ENCODE measurements at regions of chr10 and their contacts with region 1.

Region 1: GRCh38 chr10:63157845-63158624 is 24.9 kb downstream of the NRBF2 start:
- DNase-seq: peak; percentile 74
- ATAC-seq: peak; percentile 90
- H3K4me3 ChIP-seq: no peak overlapping the region
- H3K27ac ChIP-seq: no peak overlapping the region
- H3K4me1 ChIP-seq: no peaks in the 10 kb centered on the region
- H3K27me3 ChIP-seq: no peaks in the 10 kb centered on the region
- CTCF ChIP-seq: peak; percentile 89

Region 2: DNA sequence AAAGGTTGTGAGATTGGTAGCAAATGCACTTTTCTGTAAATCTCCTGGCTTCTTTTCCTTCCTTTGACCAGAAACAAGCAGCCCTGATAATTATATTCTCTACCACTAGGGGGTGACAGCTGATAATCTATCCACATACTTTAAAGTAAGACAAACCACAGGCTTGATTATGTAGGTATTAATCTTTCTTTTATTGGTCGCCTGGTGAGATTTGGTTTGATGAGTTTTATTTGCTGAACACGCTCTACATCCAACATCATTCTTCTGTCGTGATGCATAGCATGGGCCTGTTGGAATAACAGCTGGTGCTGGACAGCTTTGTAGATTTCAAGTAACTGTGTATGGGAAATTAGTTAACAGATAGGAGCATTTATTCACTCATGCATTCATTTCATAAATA is 720.3 kb before region 1 on chr10:
- CTCF ChIA-PET with region 1: no interaction called
- POLR2A ChIA-PET with region 1: no interaction called
- in situ Hi-C with region 1: no loop called
- intact Hi-C with region 1: loop called (anchors 5 kb)
- DNase-seq: no peak
- ATAC-seq: peak; percentile 82
- H3K4me3 ChIP-seq: no peak overlapping the region
- H3K27ac ChIP-seq: no peak overlapping the region
- H3K4me1 ChIP-seq: peaks cover 11% of the 10 kb centered on the region
- H3K27me3 ChIP-seq: no peaks in the 10 kb centered on the region
- CTCF ChIP-seq: peak; percentile 86

Region 3: DNA sequence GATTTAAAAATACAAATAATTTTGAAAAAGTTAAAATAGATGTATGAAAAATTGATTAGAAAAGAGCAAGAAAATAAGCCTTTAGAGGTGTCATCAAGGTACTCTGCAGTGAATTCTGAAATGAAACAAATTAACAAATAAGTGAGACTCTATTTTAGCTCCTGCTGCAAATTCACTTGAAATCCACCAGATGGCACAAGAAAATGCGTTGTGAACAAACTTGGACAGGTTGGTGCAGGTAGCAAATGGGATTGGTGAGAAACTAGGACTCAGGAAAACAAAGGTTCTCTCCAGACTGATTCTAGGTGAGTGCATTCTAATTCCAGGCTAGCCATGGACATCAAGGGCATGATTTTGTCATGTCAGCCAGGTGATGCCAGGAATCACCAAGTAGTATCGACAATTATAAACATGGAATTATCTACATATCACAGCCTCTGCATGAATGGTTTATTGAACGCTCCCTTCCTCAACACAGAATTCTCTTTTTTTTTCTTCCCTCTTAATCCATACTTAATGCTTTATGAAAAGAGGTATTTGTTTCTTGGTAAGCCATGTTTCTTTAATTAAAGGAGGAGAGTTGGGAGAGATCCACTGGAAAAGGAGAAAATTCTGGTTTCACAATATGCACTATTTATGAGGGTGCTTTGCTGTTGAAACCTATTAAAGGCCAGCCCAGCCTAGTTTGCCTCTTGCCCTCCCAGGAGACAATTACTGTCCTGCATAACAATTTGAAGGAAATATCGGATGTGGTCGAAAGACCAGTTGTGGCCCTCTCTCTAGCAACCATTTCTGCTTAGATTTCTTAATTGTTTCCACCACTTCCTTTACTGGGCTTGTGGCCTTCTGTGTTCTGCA is 665.8 kb before region 1 on chr10:
- CTCF ChIA-PET with region 1: no interaction called
- POLR2A ChIA-PET with region 1: no interaction called
- in situ Hi-C with region 1: no loop called
- intact Hi-C with region 1: loop called (anchors 5 kb)
- DNase-seq: peak; percentile 18
- ATAC-seq: peak; percentile 76; the same call in 1 of the 2 replicates
- H3K4me3 ChIP-seq: no peak overlapping the region
- H3K27ac ChIP-seq: no peak overlapping the region
- H3K4me1 ChIP-seq: no peaks in the 10 kb centered on the region
- H3K27me3 ChIP-seq: 0 out of 2 replicates have a peak, but pooled peaks cover 2% of the 10 kb centered on the region
- CTCF ChIP-seq: peak; percentile 76

Region 4: DNA sequence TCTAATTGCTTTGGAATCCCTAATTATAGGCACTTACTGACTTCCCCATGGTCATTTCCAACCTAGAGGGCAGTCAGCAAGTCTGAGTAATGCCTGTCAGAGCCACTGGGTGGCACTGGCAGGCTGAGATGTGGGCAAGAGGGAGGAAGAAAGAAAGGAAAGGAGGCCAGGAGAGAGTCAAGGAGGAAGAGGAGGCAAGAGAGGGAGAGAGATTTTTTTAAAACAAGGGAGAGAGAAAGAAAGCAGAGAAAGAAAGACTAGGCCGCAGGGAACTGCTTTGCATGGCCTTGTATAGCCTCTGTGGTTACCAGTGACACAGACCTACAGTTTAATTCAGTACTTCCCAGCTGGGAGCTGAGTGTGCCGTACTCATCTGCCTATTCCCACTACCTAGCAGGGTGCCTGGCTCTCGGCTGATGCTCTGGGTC is 563.9 kb before region 1 on chr10:
- CTCF ChIA-PET with region 1: no interaction called
- POLR2A ChIA-PET with region 1: no interaction called
- in situ Hi-C with region 1: no loop called
- intact Hi-C with region 1: loop called (anchors 5 kb)
- DNase-seq: peak; percentile 58
- ATAC-seq: peak; percentile 93
- H3K4me3 ChIP-seq: no peak overlapping the region
- H3K27ac ChIP-seq: no peak overlapping the region
- H3K4me1 ChIP-seq: no peaks in the 10 kb centered on the region
- H3K27me3 ChIP-seq: no peaks in the 10 kb centered on the region; the same call in 1 of the 2 replicates
- CTCF ChIP-seq: peak; percentile 97

Region 5: GRCh38 chr10:62972103-62972502 is 185.9 kb before region 1 on chr10:
- CTCF ChIA-PET with region 1: no interaction called
- POLR2A ChIA-PET with region 1: no interaction called
- in situ Hi-C with region 1: no loop called
- intact Hi-C with region 1: no loop called
- DNase-seq: no peak
- ATAC-seq: no peak
- H3K4me3 ChIP-seq: no peak overlapping the region
- H3K27ac ChIP-seq: no peak overlapping the region
- H3K4me1 ChIP-seq: no peaks in the 10 kb centered on the region
- H3K27me3 ChIP-seq: peaks cover 9% of the 10 kb centered on the region
- CTCF ChIP-seq: no peak